Head of caudate nucleus (tissue), 42 donors: ENCODE measurements at regions of chr2 and their contacts with region 1.

Region 1: DNA sequence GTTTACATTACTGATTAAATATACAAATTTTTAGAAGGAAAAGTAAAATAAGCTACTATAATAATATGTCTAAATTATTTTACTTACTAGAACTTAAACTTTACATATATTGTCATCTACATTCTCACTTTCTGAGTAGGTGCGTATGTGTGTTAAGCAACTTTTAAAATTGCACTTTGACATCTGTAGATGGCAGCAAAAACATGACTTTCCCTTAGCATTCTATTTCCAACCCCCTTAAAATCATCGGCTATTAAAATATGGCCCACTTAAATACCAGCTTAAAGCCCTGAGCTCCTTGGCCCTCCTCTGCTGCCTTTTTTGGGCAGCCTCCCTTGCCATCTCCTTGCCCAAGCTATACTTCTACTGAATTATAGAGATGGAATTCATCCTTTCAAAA is 78.0 kb downstream of the UPP2 start:
- DNase-seq: no peak

Region 2: GRCh38 chr2:158091647-158092046 is 88.0 kb before region 1 on chr2:
- intact Hi-C with region 1: no loop called
- DNase-seq: no peak

Region 3: GRCh38 chr2:158586491-158586890 is 406.8 kb after region 1 on chr2:
- intact Hi-C with region 1: no loop called
- DNase-seq: no peak

Region 4: DNA sequence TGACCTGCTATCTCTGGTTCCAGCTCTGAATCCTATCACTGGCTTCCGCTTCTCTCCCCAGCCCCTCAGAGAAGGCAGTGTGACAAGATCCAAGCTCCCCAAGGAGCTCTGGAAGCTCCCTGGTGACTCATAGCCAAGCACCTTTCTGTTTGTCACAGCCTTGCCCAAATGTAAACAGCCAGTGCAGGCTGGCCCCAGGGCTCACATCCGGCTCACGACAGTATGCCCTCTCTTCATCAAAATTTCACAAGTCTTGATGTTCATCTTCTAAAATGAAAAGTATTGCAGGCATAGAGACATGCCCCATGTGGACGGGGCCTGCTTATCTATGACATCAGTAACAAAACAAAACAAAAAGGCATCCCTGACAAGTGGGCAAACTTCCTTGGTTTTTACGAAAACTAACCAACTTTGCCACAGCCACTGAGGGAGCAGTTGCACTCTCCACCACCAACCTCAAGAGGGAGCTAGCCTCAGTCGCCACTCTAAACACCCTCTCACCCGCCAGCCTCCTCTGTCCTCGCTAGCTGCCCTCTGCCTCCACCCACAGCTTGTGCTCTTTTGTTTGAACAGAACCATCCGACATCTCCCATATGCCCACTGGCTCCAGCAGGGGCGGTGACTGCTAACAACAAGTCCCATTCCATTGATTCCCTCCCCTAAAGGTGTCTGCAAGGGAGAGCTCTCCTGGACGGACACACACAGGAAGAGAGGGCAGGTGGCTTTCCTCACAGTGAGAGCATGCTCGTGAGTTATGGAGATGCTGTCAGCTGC is 544.4 kb after region 1 on chr2:
- intact Hi-C with region 1: loop called (anchors 10 kb)
- DNase-seq: peak in 33 of 42 donors; percentile 11 to 79 (median 59)

Region 5: DNA sequence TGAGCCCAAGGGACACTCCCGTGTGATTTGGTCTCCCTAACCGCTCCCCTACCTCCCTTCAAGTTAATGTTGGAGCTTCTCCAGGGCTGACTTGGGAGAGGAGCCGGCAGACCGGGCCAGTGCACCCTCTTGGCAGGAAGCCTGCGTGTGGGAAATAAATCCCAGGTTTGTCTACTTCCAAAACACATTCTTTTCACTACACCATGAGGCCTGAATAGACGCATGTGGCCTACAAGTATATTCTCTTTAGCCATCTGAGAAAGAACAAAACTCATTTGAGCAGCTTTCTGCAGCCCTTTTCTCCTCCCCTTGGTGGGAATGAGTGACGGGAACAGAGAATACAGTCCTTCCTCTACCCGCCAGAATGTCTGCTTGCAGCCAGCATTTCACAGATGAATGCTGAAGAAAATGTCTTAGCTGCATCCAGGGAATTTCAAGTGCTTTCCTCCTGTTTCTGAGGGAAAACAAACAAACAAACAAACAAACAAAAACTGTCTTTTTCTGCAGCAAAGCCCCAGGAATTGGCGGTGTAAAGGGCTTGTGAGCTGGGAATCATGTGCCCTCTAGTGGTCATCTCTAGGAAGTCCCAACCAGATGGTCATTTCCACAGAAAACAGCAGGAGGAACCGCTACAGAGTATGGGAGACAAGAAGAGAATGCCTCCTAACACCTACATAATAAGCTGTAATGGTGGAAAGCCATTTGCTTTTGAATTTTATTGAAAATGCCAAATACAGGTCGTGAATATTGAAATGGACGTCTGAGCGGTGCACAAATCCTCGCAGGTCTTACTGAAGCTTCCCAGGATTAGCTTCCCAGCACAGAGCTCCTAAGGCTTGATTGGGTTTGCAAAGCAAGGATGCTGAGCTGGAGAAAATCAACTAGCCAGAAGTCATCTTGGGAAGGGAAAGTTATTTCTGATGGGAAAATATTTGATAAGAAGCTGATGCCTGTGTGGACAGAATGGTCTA is 574.3 kb after region 1 on chr2:
- intact Hi-C with region 1: loop called (anchors 10 kb)
- DNase-seq: peak in 31 of 42 donors; percentile 26 to 83 (median 62)